PC-3 (cell line): ENCODE measurements at regions of chrX and their contacts with region 1.

Region 1: GRCh38 chrX:43958529-43958928 is 14.7 kb downstream of the NDP start:
- DNase-seq: peak; percentile 76
- ATAC-seq: peak; percentile 87
- H3K4me3 ChIP-seq: no peak overlapping the region
- H3K27ac ChIP-seq: no peak overlapping the region
- H3K4me1 ChIP-seq: no peaks in the 10 kb centered on the region
- H3K27me3 ChIP-seq: no peaks in the 10 kb centered on the region
- CTCF ChIP-seq: peak; percentile 84

Region 2: DNA sequence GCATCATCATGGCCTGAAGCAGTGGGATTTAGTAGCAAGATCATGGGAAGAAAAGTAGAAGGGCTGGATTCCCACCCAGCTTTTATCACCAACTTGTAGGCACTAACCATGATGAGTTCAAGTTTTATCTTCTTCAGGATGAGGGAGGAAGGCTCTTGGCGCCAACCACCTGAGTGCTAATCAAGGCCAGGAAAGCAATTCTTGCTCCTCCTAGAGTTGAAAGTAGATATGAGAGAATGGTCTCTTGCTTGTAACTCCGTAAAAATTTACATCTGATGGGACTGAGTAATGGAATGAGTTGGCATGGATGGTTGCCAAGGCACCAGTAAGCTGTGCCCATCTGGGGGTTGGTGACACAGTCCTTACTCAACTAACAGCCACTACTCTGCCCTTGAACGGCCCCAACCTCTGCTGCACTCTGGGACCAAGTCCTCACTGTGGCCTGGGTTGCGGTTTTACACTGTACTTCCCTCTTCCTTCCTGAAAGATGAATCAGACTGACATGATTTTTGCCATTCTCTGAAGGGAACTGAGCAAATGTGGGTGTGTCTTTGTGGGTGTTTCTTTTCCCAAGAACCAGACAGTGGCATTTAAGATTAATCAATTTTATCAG is 54.1 kb after region 1 on chrX:
- CTCF ChIA-PET with region 1: interaction called, 4 read pairs
- POLR2A ChIA-PET with region 1: no interaction called
- intact Hi-C with region 1: loop called (anchors 1 kb)
- DNase-seq: peak; percentile 95
- ATAC-seq: peak; percentile 100
- H3K4me3 ChIP-seq: no peak overlapping the region
- H3K27ac ChIP-seq: peak overlapping the region; percentile 71
- H3K4me1 ChIP-seq: peaks cover 37% of the 10 kb centered on the region
- H3K27me3 ChIP-seq: no peaks in the 10 kb centered on the region
- CTCF ChIP-seq: peak; percentile 52

Region 3: GRCh38 chrX:44025555-44025954 is 67.0 kb after region 1 on chrX:
- CTCF ChIA-PET with region 1: interaction called, 6 read pairs
- POLR2A ChIA-PET with region 1: no interaction called
- intact Hi-C with region 1: loop called (anchors 1 kb)
- DNase-seq: peak; percentile 8
- ATAC-seq: no peak; the same call in 1 of the 2 replicates
- H3K4me3 ChIP-seq: no peak overlapping the region
- H3K27ac ChIP-seq: no peak overlapping the region
- H3K4me1 ChIP-seq: no peaks in the 10 kb centered on the region
- H3K27me3 ChIP-seq: no peaks in the 10 kb centered on the region
- CTCF ChIP-seq: no peak

Region 4: GRCh38 chrX:44203791-44204190 is 245.3 kb after region 1 on chrX:
- CTCF ChIA-PET with region 1: interaction called, 10 read pairs
- POLR2A ChIA-PET with region 1: no interaction called
- intact Hi-C with region 1: loop called (anchors 1 kb)
- DNase-seq: peak; percentile 60
- ATAC-seq: peak; percentile 63; the same call in 1 of the 2 replicates
- H3K4me3 ChIP-seq: no peak overlapping the region
- H3K27ac ChIP-seq: no peak overlapping the region
- H3K4me1 ChIP-seq: no peaks in the 10 kb centered on the region
- H3K27me3 ChIP-seq: no peaks in the 10 kb centered on the region
- CTCF ChIP-seq: peak; percentile 69

Region 5: GRCh38 chrX:44244008-44244407 is 285.5 kb after region 1 on chrX:
- CTCF ChIA-PET with region 1: interaction called, 15 read pairs
- POLR2A ChIA-PET with region 1: interaction called, 3 read pairs
- intact Hi-C with region 1: loop called (anchors 1 kb)
- DNase-seq: peak; percentile 60
- ATAC-seq: peak; percentile 45
- H3K4me3 ChIP-seq: no peak overlapping the region
- H3K27ac ChIP-seq: no peak overlapping the region
- H3K4me1 ChIP-seq: peaks cover 10% of the 10 kb centered on the region
- H3K27me3 ChIP-seq: no peaks in the 10 kb centered on the region
- CTCF ChIP-seq: peak; percentile 67

Region 6: DNA sequence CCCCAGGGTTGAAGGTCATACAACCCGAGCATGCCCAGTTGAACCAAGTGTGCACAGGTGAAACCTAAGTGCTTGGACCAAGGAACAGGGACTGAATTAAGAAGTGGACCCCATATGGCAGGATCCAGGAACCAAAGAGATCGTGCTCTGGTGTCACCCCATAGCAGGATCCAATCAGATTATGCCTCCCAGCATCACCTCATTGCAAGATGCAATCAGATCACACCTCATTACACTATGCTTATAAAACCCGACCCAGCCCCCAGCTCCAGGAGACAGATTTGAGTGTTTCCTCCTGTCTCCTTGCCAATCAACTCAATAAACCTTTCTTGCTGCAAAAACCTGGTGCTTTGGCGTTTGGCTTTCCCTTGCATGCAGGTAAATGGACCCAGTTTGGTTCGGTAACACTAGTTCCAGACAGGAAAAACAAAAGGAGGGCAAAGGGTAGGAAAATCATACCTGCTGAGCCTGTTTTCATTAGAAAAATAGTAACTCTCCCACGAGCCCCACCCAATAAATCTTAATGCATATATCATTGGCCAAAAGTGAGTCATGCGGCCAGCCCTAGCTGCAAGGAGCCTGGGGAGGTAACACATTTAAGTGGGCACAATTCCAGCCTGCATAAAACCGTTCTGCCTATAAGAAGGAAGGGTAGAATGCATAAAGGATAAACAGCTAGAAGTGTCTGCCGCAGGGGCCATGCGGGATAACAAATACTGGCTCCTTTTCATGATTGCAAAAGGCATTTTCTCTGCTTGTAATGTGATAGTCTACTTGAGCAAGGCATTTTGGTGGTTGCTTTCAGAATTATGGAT is 347.6 kb after region 1 on chrX:
- CTCF ChIA-PET with region 1: no interaction called
- POLR2A ChIA-PET with region 1: no interaction called
- intact Hi-C with region 1: loop called (anchors 1 kb)
- DNase-seq: peak; percentile 95
- ATAC-seq: peak; percentile 94
- H3K4me3 ChIP-seq: peak overlapping the region; percentile 49; the same call in 1 of the 2 replicates
- H3K27ac ChIP-seq: peak overlapping the region; percentile 84
- H3K4me1 ChIP-seq: peaks cover 16% of the 10 kb centered on the region
- H3K27me3 ChIP-seq: no peaks in the 10 kb centered on the region
- CTCF ChIP-seq: no peak

Region 7: GRCh38 chrX:44542567-44543325 is 584.2 kb after region 1 on chrX and contains the start of gene FUNDC1:
- CTCF ChIA-PET with region 1: interaction called, 6 read pairs
- POLR2A ChIA-PET with region 1: no interaction called
- intact Hi-C with region 1: loop called (anchors 5 kb)
- DNase-seq: peak; percentile 96
- ATAC-seq: peak; percentile 94
- H3K4me3 ChIP-seq: peak within 1 kb of the TSS; percentile 83
- H3K27ac ChIP-seq: peak within 1 kb of the TSS; percentile 29; the same call in 1 of the 2 replicates
- H3K4me1 ChIP-seq: 0 out of 2 replicates have a peak, but pooled peaks cover 13% of the 10 kb centered on the region
- H3K27me3 ChIP-seq: no peaks in the 10 kb centered on the region
- CTCF ChIP-seq: peak; percentile 58
- total RNA-seq, gene FUNDC1: 21.8 and 28.0 TPM in 2 replicates